GM10248 (cell line): ENCODE measurements at regions of chr11 and their contacts with region 1.

Region 1: DNA sequence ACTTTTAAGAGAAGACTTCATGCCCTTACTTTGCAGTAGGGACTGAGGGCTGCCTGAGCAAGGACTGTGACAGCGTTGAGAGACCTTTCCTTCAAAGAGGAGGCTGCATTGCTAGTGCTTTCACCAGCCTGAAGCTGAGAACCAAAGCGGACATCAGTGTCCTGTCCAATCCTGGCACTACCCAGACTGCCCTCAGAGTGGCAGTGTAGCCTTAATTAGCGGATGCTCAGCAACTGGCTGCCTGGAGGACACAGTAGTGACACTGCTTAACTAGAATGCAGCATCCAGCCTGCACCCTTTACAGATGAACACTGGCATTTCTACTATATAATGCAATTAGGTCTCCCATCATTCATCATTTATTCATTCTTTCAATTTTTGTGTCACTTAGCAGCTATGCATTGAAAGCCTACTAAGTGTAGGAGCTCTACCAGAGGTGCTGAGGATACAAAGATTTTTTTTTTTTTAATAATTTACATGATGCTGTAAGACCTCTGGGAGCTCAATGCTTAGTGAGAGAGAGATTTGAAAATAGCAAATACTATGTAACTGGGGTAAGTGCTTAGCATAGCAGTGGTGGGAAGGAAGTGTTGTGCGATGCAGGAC is 36.9 kb upstream of the SLC36A4 start:
- DNase-seq: peak; percentile 69
- CTCF ChIP-seq: peak; percentile 98

Region 2: DNA sequence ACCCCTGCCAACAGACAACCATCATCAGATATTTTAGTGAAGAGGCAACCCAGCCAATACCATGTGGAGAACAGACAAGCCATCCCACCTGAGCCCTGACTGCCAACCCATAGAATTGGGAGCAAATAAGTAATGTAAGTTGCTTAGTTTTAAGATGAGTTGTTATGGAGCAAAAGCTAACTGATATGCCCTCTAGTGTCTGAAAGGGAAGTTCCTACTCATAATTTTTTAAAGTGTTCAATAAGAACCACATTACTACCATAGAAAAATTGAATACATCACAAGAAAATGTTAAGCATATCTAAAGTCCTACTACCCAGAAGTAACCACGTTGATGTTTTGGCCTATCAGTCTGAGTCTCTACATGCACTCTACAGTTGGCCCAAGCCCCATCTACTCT is 13.9 kb after region 1 on chr11:
- CTCF ChIA-PET with region 1: interaction called, 12 read pairs
- POLR2A ChIA-PET with region 1: no interaction called
- DNase-seq: no peak
- CTCF ChIP-seq: peak; percentile 32